ENCODE measurements at regions of chr17 and their contacts with region 1.

Region 1: DNA sequence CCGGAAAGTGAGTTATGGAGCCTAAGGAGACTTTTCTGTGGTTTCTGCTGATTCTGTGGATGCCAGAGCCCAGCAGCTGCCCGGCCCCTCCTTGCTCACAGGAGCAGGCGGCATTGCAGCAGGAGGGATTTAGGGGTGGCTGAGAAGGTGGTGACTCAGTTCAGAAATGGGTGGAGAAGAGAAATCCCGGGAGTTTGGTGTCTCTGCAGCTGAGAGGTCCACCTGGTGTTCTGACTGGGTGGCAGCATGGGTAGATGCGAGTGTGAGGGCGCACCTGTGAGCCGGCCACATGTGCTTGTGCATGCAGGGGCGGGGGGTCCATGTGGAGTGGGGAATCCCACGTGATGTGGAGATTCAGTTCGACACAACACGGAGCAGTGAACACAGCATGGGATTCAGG is 16.1 kb upstream of the SPPL2C start:
- DNase-seq: no peak
- H3K4me3 ChIP-seq: no peak overlapping the region
- H3K27ac ChIP-seq: no peak overlapping the region
- H3K4me1 ChIP-seq: no peaks in the 10 kb centered on the region
- H3K27me3 ChIP-seq: no peaks in the 10 kb centered on the region
- CTCF ChIP-seq: no peak
- POLR2A ChIP-seq: no peak

Region 2: DNA sequence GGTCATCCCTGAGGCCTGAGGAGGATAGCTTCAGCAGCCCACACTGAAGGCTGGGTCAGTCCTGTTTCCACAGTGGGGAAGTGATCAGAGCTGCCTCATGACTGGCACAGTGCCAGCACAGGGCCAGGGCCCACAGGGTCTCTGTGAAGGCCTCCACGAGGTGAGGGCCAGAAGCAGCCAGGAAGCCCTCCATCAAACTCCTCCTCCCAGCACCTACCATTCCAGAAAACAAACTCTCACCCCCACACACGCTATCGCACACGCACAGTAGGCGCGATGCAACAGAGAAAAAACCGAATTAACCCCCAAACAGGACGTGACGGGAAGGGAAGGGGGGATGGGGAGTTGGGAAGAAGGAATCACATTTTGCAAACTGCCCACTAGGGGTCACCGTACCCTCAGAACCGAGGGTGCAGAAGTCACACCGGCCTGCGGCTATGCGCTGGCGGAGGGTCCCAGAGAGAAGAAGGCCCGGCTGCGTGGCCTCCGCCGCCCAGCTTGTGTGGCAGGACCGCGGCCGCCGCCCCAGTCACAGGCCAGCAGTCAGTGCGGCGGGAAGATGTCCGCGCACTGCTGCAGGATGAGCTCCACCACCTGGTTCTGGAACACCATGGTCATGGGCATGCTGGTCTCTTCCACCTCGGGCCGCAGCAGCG is 433.6 kb before region 1 on chr17:
- CTCF ChIA-PET with region 1: interaction called, 22 read pairs
- POLR2A ChIA-PET with region 1: no interaction called
- dilution Hi-C with region 1: no loop called
- intact Hi-C with region 1: loop called (anchors 10 kb)
- DNase-seq: peak; percentile 78
- H3K4me3 ChIP-seq: no peak overlapping the region
- H3K27ac ChIP-seq: no peak overlapping the region
- H3K4me1 ChIP-seq: no peaks in the 10 kb centered on the region
- H3K27me3 ChIP-seq: no peaks in the 10 kb centered on the region
- CTCF ChIP-seq: peak; percentile 62 to 78
- POLR2A ChIP-seq: no peak

Region 3: DNA sequence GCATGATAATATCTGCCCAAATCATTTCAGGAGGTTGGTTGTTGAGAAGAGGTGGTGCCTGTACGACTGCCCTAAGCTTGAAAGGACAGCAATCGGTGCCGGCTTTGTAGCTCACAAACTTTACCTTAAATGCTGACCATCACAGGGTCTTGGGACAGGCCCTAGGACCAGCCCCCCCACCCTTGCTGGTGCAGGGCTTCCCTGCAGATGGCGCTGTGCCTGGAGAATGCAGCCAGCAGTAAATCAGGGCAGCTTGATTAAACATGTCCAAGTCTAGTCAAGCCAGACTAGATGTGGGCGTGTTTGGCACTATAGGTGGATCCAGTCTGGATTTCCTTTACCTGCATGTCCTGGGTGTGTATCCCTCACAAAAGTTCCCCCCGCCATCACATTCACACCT is 180.0 kb before region 1 on chr17:
- CTCF ChIA-PET with region 1: interaction called, 12 read pairs
- POLR2A ChIA-PET with region 1: no interaction called
- dilution Hi-C with region 1: no loop called
- intact Hi-C with region 1: no loop called
- DNase-seq: no peak
- H3K4me3 ChIP-seq: no peak overlapping the region
- H3K27ac ChIP-seq: no peak overlapping the region
- H3K4me1 ChIP-seq: no peaks in the 10 kb centered on the region
- H3K27me3 ChIP-seq: peaks cover 1 to 14% of the 10 kb centered on the region in 2 experiments
- CTCF ChIP-seq: peak in 1 of 2 donors; percentile 20
- POLR2A ChIP-seq: no peak

Region 4: GRCh38 chr17:45782889-45783592 is 45.6 kb before region 1 on chr17:
- CTCF ChIA-PET with region 1: interaction called, 12 read pairs
- POLR2A ChIA-PET with region 1: no interaction called
- dilution Hi-C with region 1: no loop called
- intact Hi-C with region 1: loop called (anchors 5 kb)
- DNase-seq: peak; percentile 11
- H3K4me3 ChIP-seq: no peak overlapping the region
- H3K27ac ChIP-seq: no peak overlapping the region
- H3K4me1 ChIP-seq: peaks cover 8% of the 10 kb centered on the region
- H3K27me3 ChIP-seq: peaks cover 57 to 63% of the 10 kb centered on the region in 2 experiments
- CTCF ChIP-seq: peak; percentile 48 to 76
- POLR2A ChIP-seq: no peak

Region 5: DNA sequence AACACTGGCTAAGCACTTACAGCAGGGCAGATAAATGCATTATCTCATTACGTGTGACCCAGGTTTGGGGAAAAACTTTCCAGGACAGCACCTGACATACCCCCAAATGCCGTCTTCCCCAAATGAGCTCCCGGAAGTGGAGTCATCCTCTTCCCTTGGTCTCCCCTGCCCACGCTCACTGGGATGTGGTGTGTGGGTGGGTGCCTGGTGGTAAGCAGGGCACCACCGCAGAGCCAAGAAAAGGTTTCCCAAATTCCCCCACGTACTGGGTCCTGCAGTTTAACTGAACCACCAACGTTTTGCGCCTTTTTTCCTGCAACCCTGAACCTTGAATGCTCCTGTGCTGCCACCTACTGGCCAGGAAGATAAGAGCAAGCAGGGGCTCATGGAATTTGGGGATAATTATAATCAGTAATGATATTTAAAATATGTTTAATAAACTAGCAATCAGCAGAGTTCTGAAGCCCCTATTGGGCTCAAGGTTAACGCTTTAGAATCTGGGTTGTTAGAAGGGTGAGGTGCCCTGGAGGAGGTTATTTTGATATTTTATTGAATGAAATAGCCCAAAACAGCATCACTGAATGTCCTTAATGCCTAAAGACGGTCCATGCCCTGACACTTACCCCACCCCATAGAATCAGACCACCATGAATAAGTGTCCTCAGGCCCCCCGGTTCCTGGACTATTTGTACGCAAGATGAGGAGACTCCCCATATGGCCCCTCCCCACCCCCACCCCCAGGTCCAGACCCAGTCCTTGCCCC is 24.1 kb after region 1 on chr17:
- CTCF ChIA-PET with region 1: interaction called, 13 read pairs
- POLR2A ChIA-PET with region 1: no interaction called
- dilution Hi-C with region 1: no loop called
- intact Hi-C with region 1: no loop called
- DNase-seq: peak; percentile 44
- H3K4me3 ChIP-seq: no peak overlapping the region
- H3K27ac ChIP-seq: no peak overlapping the region
- H3K4me1 ChIP-seq: no peaks in the 10 kb centered on the region
- H3K27me3 ChIP-seq: peaks cover 0 to 4% of the 10 kb centered on the region in 2 experiments
- CTCF ChIP-seq: peak; percentile 76 to 91
- POLR2A ChIP-seq: no peak

Region 6: GRCh38 chr17:46266656-46267544 is 438.3 kb after region 1 on chr17:
- CTCF ChIA-PET with region 1: no interaction called
- POLR2A ChIA-PET with region 1: no interaction called
- dilution Hi-C with region 1: no loop called
- intact Hi-C with region 1: no loop called
- DNase-seq: peak; percentile 88
- H3K4me3 ChIP-seq: peak overlapping the region; percentile 41 to 90 (median 41)
- H3K27ac ChIP-seq: peak overlapping the region; percentile 26
- H3K4me1 ChIP-seq: peaks cover 14% of the 10 kb centered on the region
- H3K27me3 ChIP-seq: peaks cover 0 to 4% of the 10 kb centered on the region in 2 experiments
- CTCF ChIP-seq: no peak
- POLR2A ChIP-seq: peak; percentile 84